Mammary epithelial cell (primary cell): ENCODE measurements at regions of chr9 and their contacts with region 1.

Region 1: GRCh38 chr9:125608489-125609224 is 98.4 kb downstream of the MAPKAP1 start:
- DNase-seq: no peak
- H3K4me3 ChIP-seq: no peak overlapping the region
- H3K27ac ChIP-seq: no peak overlapping the region
- H3K4me1 ChIP-seq: no peaks in the 10 kb centered on the region
- H3K27me3 ChIP-seq: no peaks in the 10 kb centered on the region
- CTCF ChIP-seq: no peak

Region 2: GRCh38 chr9:125568621-125569020 is 40.0 kb before region 1 on chr9:
- CTCF ChIA-PET with region 1: no interaction called
- dilution Hi-C with region 1: loop called (anchors 5 kb)
- in situ Hi-C with region 1: no loop called
- intact Hi-C with region 1: no loop called
- DNase-seq: no peak
- H3K4me3 ChIP-seq: no peak overlapping the region
- H3K27ac ChIP-seq: no peak overlapping the region
- H3K4me1 ChIP-seq: peaks cover 23% of the 10 kb centered on the region
- H3K27me3 ChIP-seq: no peaks in the 10 kb centered on the region
- CTCF ChIP-seq: no peak